Naive thymus-derived CD4-positive, alpha-beta T cell (primary cell): ENCODE measurements at regions of chr1 and their contacts with region 1.

Region 1: DNA sequence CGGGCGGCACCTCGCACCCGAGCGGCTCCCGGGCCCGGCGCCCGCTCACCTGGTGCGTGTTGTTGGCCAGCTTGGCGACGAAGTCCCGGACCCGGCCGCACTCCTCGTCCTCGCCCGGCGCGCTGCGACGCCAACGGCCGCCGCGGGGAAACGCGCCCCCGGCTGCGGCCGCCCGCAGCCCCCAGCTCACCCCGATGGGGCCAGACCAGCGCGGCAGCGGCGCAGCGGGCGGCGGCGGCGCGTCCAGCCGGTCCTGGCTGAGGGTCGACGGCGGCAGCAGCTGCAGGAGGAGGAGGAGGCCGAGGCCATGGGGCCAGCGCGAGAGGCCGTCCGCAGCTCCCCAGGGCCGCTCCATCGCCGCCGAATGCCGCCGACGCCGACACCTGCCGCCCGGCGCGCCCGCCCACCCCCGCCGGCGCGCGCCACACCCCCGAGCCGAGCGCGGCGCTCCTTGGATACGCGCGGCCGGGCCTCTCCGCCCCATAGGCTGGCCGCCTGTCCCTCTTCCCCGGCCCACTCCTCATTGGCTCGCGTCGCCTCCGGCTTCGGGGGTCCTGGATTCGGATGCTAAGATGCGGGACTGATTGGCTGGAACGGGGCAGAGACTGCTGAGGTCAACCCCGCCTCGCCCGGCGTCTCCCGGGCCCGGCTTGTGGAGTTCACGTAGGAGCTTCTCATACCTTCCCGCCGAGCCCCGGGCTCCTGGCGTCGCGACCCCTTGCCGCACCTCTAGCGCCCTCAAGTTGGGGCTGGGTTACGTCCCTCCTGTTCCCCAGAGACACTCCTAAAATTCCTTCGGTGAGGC is at the start of gene SORT1:
- DNase-seq: peak; percentile 29 to 67 (median 43)
- ATAC-seq: peak; percentile 94
- H3K4me3 ChIP-seq: peak within 1 kb of the TSS; percentile 37
- H3K4me3 Mint-ChIP-seq: peak within 1 kb of the TSS; percentile 80 to 90 (median 86)
- H3K27ac ChIP-seq: no peak within 1 kb of the TSS
- H3K27ac Mint-ChIP-seq: peak within 1 kb of the TSS in 2 of 9 donors; percentile 43 to 74
- H3K4me1 ChIP-seq: peaks cover 0 to 6% of the 10 kb centered on the region in 2 donors
- H3K4me1 Mint-ChIP-seq: peaks cover 0 to 30% (median 16%) of the 10 kb centered on the region in 7 donors
- H3K27me3 ChIP-seq: peaks cover 0 to 18% of the 10 kb centered on the region in 2 donors
- H3K27me3 Mint-ChIP-seq: peaks cover 36 to 51% (median 41%) of the 10 kb centered on the region in 5 donors
- total RNA-seq, gene SORT1: 1.0 to 25.6 (median 1.8) TPM

Region 2: DNA sequence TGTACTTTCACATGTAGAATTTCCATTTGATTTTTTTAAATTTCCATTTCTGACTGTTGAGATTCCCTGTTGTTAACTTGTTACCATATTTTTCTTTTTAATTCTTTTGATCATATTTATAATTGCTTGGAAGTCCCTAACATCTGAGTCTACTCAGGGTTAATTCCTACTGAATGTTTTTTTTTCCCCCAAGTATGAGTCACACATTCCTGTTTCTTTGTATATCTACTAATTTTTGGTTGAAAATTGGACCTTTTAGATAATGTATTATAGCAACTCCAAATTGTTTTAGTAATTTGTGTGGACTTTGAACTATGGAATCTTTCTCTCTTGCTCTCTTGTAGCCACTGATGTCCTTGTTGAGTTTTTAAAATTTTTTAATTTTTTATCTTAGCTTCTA is 596.6 kb before region 1 on chr1:
- CTCF ChIA-PET with region 1: no interaction called
- POLR2A ChIA-PET with region 1: no interaction called
- intact Hi-C with region 1: no loop called
- DNase-seq: no peak
- ATAC-seq: no peak
- H3K4me3 ChIP-seq: no peak overlapping the region
- H3K4me3 Mint-ChIP-seq: no peak overlapping the region
- H3K27ac ChIP-seq: no peak overlapping the region
- H3K27ac Mint-ChIP-seq: peak overlapping the region in 2 of 9 donors; percentile 7 to 14
- H3K4me1 ChIP-seq: no peaks in the 10 kb centered on the region
- H3K4me1 Mint-ChIP-seq: peaks cover 0 to 5% (median 0%) of the 10 kb centered on the region in 7 donors
- H3K27me3 ChIP-seq: no peaks in the 10 kb centered on the region
- H3K27me3 Mint-ChIP-seq: no peaks in the 10 kb centered on the region

Region 3: GRCh38 chr1:108828022-108828961 is 569.4 kb before region 1 on chr1:
- CTCF ChIA-PET with region 1: no interaction called
- POLR2A ChIA-PET with region 1: no interaction called
- intact Hi-C with region 1: loop called in 1 of 2 experiments (anchors 1 kb)
- DNase-seq: peak; percentile 37 to 62 (median 46)
- ATAC-seq: peak; percentile 61
- H3K4me3 ChIP-seq: no peak overlapping the region
- H3K4me3 Mint-ChIP-seq: no peak overlapping the region
- H3K27ac ChIP-seq: no peak overlapping the region
- H3K27ac Mint-ChIP-seq: no peak overlapping the region
- H3K4me1 ChIP-seq: no peaks in the 10 kb centered on the region
- H3K4me1 Mint-ChIP-seq: peaks cover 0 to 9% (median 0%) of the 10 kb centered on the region in 7 donors
- H3K27me3 ChIP-seq: peaks cover 0 to 3% of the 10 kb centered on the region in 2 donors
- H3K27me3 Mint-ChIP-seq: peaks cover 0 to 12% (median 0%) of the 10 kb centered on the region in 5 donors

Region 4: GRCh38 chr1:109181105-109181806 is 216.5 kb before region 1 on chr1:
- CTCF ChIA-PET with region 1: no interaction called
- POLR2A ChIA-PET with region 1: no interaction called
- intact Hi-C with region 1: no loop called
- DNase-seq: no peak
- ATAC-seq: no peak
- H3K4me3 ChIP-seq: no peak overlapping the region
- H3K4me3 Mint-ChIP-seq: no peak overlapping the region
- H3K27ac ChIP-seq: no peak overlapping the region
- H3K27ac Mint-ChIP-seq: no peak overlapping the region
- H3K4me1 ChIP-seq: no peaks in the 10 kb centered on the region
- H3K4me1 Mint-ChIP-seq: peaks cover 0 to 2% (median 0%) of the 10 kb centered on the region in 7 donors
- H3K27me3 ChIP-seq: no peaks in the 10 kb centered on the region
- H3K27me3 Mint-ChIP-seq: no peaks in the 10 kb centered on the region

Region 5: GRCh38 chr1:109263597-109264398 is 133.9 kb before region 1 on chr1:
- CTCF ChIA-PET with region 1: interaction called, 9 read pairs
- POLR2A ChIA-PET with region 1: no interaction called
- intact Hi-C with region 1: loop called (anchors 1 kb)
- DNase-seq: peak; percentile 57 to 86 (median 68)
- ATAC-seq: peak; percentile 92
- H3K4me3 ChIP-seq: no peak overlapping the region
- H3K4me3 Mint-ChIP-seq: peak overlapping the region in 1 of 10 donors; percentile 60
- H3K27ac ChIP-seq: no peak overlapping the region
- H3K27ac Mint-ChIP-seq: peak overlapping the region in 1 of 9 donors; percentile 36
- H3K4me1 ChIP-seq: no peaks in the 10 kb centered on the region
- H3K4me1 Mint-ChIP-seq: peaks cover 0 to 9% (median 0%) of the 10 kb centered on the region in 7 donors
- H3K27me3 ChIP-seq: no peaks in the 10 kb centered on the region
- H3K27me3 Mint-ChIP-seq: no peaks in the 10 kb centered on the region

Region 6: GRCh38 chr1:109282952-109283747 is 114.6 kb before region 1 on chr1 and contains the start of gene PSRC1:
- CTCF ChIA-PET with region 1: interaction called, 62 read pairs
- POLR2A ChIA-PET with region 1: no interaction called
- intact Hi-C with region 1: loop called in 1 of 2 experiments (anchors 1 kb)
- DNase-seq: peak; percentile 78 to 94 (median 88)
- ATAC-seq: peak; percentile 98
- H3K4me3 ChIP-seq: peak within 1 kb of the TSS; percentile 92
- H3K4me3 Mint-ChIP-seq: peak within 1 kb of the TSS; percentile 89 to 99 (median 96)
- H3K27ac ChIP-seq: peak within 1 kb of the TSS; percentile 65
- H3K27ac Mint-ChIP-seq: peak within 1 kb of the TSS; percentile 55 to 94 (median 88)
- H3K4me1 ChIP-seq: peaks cover 8 to 11% of the 10 kb centered on the region in 2 donors
- H3K4me1 Mint-ChIP-seq: peaks cover 6 to 29% (median 14%) of the 10 kb centered on the region in 7 donors
- H3K27me3 ChIP-seq: no peaks in the 10 kb centered on the region
- H3K27me3 Mint-ChIP-seq: peaks cover 0 to 8% (median 0%) of the 10 kb centered on the region in 5 donors
- total RNA-seq, gene PSRC1: 0.38 to 16.1 (median 1.3) TPM in 4 of 5 experiments, not detected in the other

Region 7: GRCh38 chr1:109295712-109296415 is 101.9 kb before region 1 on chr1:
- CTCF ChIA-PET with region 1: no interaction called
- POLR2A ChIA-PET with region 1: no interaction called
- intact Hi-C with region 1: no loop called
- DNase-seq: no peak
- ATAC-seq: no peak
- H3K4me3 ChIP-seq: no peak overlapping the region
- H3K4me3 Mint-ChIP-seq: no peak overlapping the region
- H3K27ac ChIP-seq: no peak overlapping the region
- H3K27ac Mint-ChIP-seq: peak overlapping the region in 1 of 9 donors; percentile 32
- H3K4me1 ChIP-seq: no peaks in the 10 kb centered on the region
- H3K4me1 Mint-ChIP-seq: peaks cover 0 to 3% (median 0%) of the 10 kb centered on the region in 7 donors
- H3K27me3 ChIP-seq: no peaks in the 10 kb centered on the region
- H3K27me3 Mint-ChIP-seq: peaks cover 0 to 31% (median 10%) of the 10 kb centered on the region in 5 donors

Region 8: DNA sequence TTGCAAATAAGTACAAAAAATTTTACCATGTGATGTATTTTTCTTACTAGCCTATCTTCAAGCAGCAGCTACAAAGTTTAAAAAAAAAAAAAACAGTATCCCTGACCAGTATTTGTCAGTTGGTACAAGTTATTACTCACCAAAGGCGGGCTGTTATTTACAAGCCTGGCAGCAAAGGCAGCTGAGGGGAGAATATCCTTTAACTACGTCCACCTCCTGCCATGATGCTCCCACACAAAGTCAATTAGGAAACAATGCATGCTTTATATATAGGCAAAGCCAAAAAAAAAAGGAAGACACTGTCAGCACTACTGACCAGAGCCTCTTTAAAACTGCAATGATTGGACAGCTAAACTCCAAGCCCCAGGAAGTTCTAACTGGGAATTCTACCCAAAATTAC is 14.8 kb after region 1 on chr1:
- CTCF ChIA-PET with region 1: interaction called, 3 read pairs
- POLR2A ChIA-PET with region 1: interaction called, 4 read pairs
- intact Hi-C with region 1: loop called in 1 of 2 experiments (anchors 2 kb)
- DNase-seq: no peak
- ATAC-seq: no peak
- H3K4me3 ChIP-seq: no peak overlapping the region
- H3K4me3 Mint-ChIP-seq: no peak overlapping the region
- H3K27ac ChIP-seq: no peak overlapping the region
- H3K27ac Mint-ChIP-seq: peak overlapping the region in 2 of 9 donors; percentile 38 to 46
- H3K4me1 ChIP-seq: peaks cover under 1 to 9% of the 10 kb centered on the region in 2 donors
- H3K4me1 Mint-ChIP-seq: peaks cover 25 to 68% (median 52%) of the 10 kb centered on the region in 7 donors
- H3K27me3 ChIP-seq: no peaks in the 10 kb centered on the region
- H3K27me3 Mint-ChIP-seq: no peaks in the 10 kb centered on the region